Astrocyte of the spinal cord (primary cell): ENCODE measurements at regions of chr1 and their contacts with region 1.

Region 1: GRCh38 chr1:180863158-180863775 is 49.4 kb upstream of the KIAA1614 start:
- DNase-seq: peak; percentile 70
- H3K4me3 ChIP-seq: no peak overlapping the region
- CTCF ChIP-seq: peak; percentile 47

Region 2: DNA sequence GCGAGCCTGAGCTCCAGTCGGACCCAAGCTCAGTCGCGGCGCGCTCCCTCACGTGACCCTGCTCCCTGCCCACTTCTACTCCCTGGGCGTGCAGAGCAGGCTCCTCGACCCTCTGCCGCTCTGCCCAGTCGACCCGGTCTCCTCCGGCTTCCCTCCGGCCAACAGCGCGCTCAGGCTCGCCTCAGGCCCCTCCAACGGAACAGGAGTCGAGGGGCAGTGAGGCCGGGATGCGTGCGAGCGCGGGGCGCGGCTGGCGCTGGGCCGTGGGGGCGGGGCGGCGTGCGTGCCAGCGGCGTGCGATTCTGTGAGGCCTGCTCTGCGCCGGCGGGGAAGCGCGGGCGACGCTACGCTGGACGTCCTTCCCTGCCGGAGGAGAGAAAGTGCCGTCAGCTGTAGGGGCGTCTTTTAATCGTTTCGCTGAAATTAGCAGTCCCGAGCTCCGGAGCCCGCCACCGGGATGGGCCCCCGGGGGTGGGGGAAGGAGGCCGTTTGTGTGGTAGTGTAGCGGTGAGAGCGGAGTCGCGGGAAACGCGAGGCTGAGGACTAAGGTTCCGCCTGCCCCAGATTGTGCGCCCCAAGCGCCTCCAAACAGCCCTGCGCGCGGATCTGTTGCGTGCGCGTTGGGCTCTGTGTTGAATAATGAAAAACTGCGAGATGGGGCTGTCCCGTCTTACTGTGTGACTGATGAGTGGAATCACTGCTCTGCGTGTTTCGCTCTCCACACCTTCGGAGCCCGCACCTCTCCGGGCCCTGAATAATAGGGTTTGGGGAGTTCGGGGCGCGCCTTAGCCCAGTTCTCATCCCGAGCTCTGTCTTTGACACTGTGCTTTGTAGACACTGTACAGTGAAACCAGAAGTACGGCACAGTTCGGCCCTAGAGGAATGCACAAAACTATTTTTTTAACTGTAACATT is 360.6 kb before region 1 on chr1 and contains the start of gene ACBD6:
- in situ Hi-C with region 1: loop called (anchors 25 kb)
- DNase-seq: peak; percentile 89
- H3K4me3 ChIP-seq: peak within 1 kb of the TSS; percentile 74
- CTCF ChIP-seq: peak; percentile 7

Region 3: DNA sequence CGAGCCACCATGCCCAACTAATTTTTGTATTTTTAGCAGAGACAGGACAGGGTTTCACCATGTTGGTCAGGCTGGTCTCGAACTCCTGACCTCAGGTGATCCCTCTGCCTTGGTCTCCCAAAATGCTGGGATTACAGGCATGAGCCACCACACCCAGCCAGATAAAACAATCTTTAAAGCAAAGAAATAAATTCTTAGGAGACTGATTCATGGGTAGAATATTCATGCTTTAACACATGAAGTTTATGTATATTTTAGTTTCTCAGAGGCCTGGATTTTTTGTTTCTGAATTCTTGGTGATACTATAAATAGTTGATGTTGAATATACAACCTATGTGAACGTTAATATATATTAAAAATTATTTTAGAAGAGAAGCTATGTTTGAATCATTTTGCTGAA is 78.0 kb before region 1 on chr1:
- in situ Hi-C with region 1: no loop called
- DNase-seq: no peak
- H3K4me3 ChIP-seq: no peak overlapping the region
- CTCF ChIP-seq: no peak